B cell (primary cell): ENCODE measurements at regions of chr3 and their contacts with region 1.

Region 1: DNA sequence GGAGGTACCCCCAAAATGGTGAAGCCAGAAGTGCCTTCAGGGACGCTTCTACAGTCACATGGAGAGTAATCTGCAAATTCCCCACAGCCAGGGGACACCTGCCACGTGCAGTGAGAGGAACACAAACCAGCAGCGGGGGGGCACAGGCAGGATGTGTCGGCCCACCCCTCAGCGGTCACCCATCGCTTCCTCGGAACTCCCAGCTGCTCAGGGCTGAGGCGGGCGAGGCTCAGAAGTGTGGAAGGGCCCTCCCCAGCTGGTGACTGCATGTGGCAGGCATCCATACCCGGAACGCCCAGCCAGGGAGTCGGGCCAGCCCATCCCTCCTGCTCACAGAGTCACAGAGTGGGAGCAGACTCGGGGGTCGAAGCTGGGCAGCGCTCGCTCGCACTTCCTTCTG is 63.7 kb downstream of the SLC12A8 start:
- DNase-seq: peak; percentile 77
- ATAC-seq: peak; percentile 35
- H3K4me3 ChIP-seq: no peak overlapping the region
- H3K4me3 Mint-ChIP-seq: peak overlapping the region; percentile 1
- H3K27ac ChIP-seq: peak overlapping the region; percentile 47 to 53
- H3K27ac Mint-ChIP-seq: peak overlapping the region; percentile 60
- H3K4me1 ChIP-seq: peaks cover 39 to 64% of the 10 kb centered on the region in 2 donors
- H3K4me1 Mint-ChIP-seq: peaks cover 48% of the 10 kb centered on the region
- H3K27me3 ChIP-seq: no peaks in the 10 kb centered on the region
- H3K27me3 Mint-ChIP-seq: no peaks in the 10 kb centered on the region
- CTCF ChIP-seq: no peak

Region 2: GRCh38 chr3:125055913-125056745 is 92.7 kb before region 1 on chr3 and contains the start of gene HEG1:
- CTCF ChIA-PET with region 1: no interaction called
- POLR2A ChIA-PET with region 1: no interaction called
- intact Hi-C with region 1: loop called (anchors 5 kb)
- DNase-seq: peak; percentile 80
- ATAC-seq: peak; percentile 79
- H3K4me3 ChIP-seq: peak within 1 kb of the TSS; percentile 47 to 83 (median 69)
- H3K4me3 Mint-ChIP-seq: peak within 1 kb of the TSS; percentile 96
- H3K27ac ChIP-seq: peak within 1 kb of the TSS; percentile 44 to 62
- H3K27ac Mint-ChIP-seq: peak within 1 kb of the TSS; percentile 83
- H3K4me1 ChIP-seq: peaks cover 31 to 45% of the 10 kb centered on the region in 2 donors
- H3K4me1 Mint-ChIP-seq: peaks cover 40% of the 10 kb centered on the region
- H3K27me3 ChIP-seq: peaks cover 0 to 6% (median 2%) of the 10 kb centered on the region in 4 experiments
- H3K27me3 Mint-ChIP-seq: peaks cover 13% of the 10 kb centered on the region
- CTCF ChIP-seq: no peak
- total RNA-seq, gene HEG1: 8.9 and 9.2 TPM in 2 replicates

Region 3: GRCh38 chr3:125083776-125084175 is 65.1 kb before region 1 on chr3:
- CTCF ChIA-PET with region 1: no interaction called
- POLR2A ChIA-PET with region 1: no interaction called
- intact Hi-C with region 1: no loop called
- DNase-seq: no peak
- ATAC-seq: no peak
- H3K4me3 ChIP-seq: no peak overlapping the region
- H3K4me3 Mint-ChIP-seq: no peak overlapping the region
- H3K27ac ChIP-seq: no peak overlapping the region
- H3K27ac Mint-ChIP-seq: no peak overlapping the region
- H3K4me1 ChIP-seq: no peaks in the 10 kb centered on the region
- H3K4me1 Mint-ChIP-seq: peaks cover 2% of the 10 kb centered on the region
- H3K27me3 ChIP-seq: no peaks in the 10 kb centered on the region
- H3K27me3 Mint-ChIP-seq: no peaks in the 10 kb centered on the region
- CTCF ChIP-seq: no peak

Region 4: DNA sequence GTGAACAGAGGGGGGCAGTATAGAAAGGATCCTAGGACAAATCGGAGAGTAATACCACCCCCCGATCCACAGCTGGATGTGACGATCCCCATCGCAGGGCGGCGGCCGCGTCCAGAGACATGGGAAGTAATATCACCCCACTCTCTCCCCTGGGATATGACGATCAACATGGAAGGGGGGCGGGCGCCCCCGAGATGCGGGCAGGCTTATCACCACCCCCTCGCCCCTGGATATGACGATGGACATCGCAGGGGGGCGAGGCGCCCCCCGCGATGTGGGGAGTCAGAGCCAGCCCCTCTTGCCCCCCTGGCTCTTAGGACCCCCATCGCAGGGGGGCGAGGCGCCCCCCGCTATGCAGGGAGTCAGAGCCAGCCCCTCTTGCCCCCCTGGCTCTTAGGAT is 566.8 kb after region 1 on chr3:
- CTCF ChIA-PET with region 1: no interaction called
- POLR2A ChIA-PET with region 1: no interaction called
- intact Hi-C with region 1: no loop called
- DNase-seq: no peak
- ATAC-seq: no peak
- H3K4me3 ChIP-seq: no peak overlapping the region
- H3K4me3 Mint-ChIP-seq: no peak overlapping the region
- H3K27ac ChIP-seq: no peak overlapping the region
- H3K27ac Mint-ChIP-seq: no peak overlapping the region
- H3K4me1 ChIP-seq: no peaks in the 10 kb centered on the region
- H3K4me1 Mint-ChIP-seq: no peaks in the 10 kb centered on the region
- H3K27me3 ChIP-seq: no peaks in the 10 kb centered on the region
- H3K27me3 Mint-ChIP-seq: no peaks in the 10 kb centered on the region
- CTCF ChIP-seq: no peak